H1 (cell line): ENCODE measurements at regions of chrX and their contacts with region 1.

Region 1: DNA sequence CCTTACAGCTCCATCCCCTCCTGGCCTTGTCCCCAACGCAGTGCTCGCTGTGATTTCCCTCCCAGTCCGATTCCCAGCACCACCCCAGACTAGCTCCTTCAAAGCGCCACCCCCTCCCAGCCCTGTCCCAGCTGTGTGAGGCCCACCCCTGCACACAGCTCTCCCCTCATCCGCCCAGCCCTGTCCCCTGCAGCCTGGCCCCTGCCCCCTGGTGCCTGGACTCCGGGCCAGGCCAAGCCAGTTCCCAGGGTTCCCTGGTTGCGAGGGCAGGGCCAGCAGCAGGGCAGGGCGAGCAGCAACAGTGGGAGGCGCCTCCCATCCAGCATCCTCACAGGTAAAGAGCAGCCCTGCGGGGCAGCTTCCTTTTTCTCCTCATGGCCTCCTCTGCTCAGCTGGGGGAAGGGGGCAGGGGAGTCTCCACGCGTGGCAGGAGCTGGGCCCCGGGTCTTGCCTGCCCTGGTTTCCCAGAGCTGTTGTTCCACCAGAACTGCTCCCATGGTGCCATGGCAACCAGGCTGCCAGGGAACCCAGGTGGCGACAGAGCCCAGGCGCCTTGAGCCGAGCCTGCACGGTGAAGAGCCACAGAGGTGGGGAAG is 24.8 kb downstream of the IQSEC2 start:
- DNase-seq: no peak
- H3K4me3 ChIP-seq: peak overlapping the region in 2 of 4 experiments; percentile 5 to 45; a peak in 3 of 8 replicates
- H3K27ac ChIP-seq: no peak overlapping the region; the same call in 1 of the 2 replicates
- H3K4me1 ChIP-seq: peaks cover 0 to 11% (median 4%) of the 10 kb centered on the region in 4 experiments; a peak in 5 of 7 replicates
- H3K27me3 ChIP-seq: no peaks in the 10 kb centered on the region
- CTCF ChIP-seq: no peak
- EP300 ChIP-seq: no peak
- POLR2A ChIP-seq: no peak
- RAD21 ChIP-seq: no peak

Region 2: DNA sequence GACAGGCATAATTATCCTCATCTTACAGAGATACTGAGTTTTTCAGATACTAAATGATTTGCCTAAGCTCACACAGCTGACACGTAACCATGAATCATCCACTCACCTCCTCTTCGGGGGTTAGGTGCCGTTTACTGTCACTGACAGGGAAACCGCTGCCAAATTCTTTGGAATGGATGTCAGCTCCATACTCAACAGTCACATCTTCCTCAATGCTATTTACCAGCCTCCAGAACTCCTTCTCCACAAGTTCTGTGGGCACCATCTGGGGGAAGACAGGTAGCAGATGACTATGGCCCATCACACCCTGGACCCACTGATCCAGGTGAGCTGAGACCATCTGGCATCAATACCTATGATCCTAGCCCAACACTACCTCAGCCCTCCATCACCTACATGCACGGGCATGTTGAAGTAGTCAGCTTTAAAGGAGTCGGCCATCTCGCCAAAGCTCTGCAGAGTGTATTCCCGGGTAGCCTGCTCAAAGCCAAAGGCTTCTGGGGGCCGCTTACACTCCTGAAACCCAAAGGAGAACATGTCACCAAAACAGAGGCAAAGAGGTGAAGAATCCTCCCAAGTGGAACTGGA is 45.1 kb before region 1 on chrX:
- CTCF ChIA-PET with region 1: no interaction called
- POLR2A ChIA-PET with region 1: no interaction called
- DNase-seq: no peak
- H3K4me3 ChIP-seq: no peak overlapping the region
- H3K27ac ChIP-seq: no peak overlapping the region
- H3K4me1 ChIP-seq: no peaks in the 10 kb centered on the region
- H3K27me3 ChIP-seq: no peaks in the 10 kb centered on the region
- CTCF ChIP-seq: no peak
- EP300 ChIP-seq: no peak
- POLR2A ChIP-seq: no peak
- RAD21 ChIP-seq: no peak

Region 3: DNA sequence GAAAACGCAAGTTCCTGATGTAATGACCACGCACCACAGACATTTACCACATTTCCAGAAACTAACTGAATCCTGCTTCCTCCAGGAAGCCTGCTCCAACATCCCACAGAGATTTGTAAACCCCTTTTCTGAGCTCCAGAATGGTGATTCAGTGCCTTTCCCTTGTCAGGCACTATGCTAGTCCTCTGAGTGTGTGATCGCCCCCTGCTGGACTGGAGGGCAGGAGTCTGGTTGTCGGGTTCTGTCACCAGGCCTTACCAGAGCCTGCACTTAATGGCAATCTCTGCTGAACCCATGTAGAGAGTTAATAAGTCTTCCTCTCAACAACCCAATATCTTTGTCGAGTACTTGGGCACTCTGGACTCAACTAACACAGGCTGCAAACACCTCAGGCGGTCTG is 17.1 kb before region 1 on chrX:
- CTCF ChIA-PET with region 1: interaction called, 12 read pairs
- POLR2A ChIA-PET with region 1: interaction called, 3 read pairs
- DNase-seq: peak in 1 of 2 experiments; percentile 49
- H3K4me3 ChIP-seq: no peak overlapping the region
- H3K27ac ChIP-seq: no peak overlapping the region
- H3K4me1 ChIP-seq: no peaks in the 10 kb centered on the region
- H3K27me3 ChIP-seq: no peaks in the 10 kb centered on the region
- CTCF ChIP-seq: peak; percentile 22 to 61 (median 59); a peak in 3 of 4 replicates
- EP300 ChIP-seq: no peak
- POLR2A ChIP-seq: no peak
- RAD21 ChIP-seq: 0 out of 4 replicates have a peak, but pooled peaks of 1 of the 2 experiments have one; percentile 9

Region 4: DNA sequence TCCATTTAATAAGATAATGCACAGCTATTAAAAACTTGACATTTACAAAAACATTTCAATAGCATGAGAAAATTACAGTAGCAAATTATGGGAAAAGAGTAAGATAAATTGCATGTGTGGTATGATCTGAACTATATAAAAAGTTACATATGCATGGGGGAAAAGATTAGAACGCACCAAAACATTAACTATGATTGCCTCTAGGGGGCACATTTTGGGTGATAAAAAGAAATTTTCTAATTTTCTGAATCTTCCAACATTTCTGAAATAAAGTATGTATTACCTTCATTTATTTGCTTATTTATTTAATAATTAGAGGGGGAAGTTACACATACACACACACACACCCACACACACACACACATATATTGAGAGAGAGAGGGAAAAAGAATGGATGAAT is 11.9 kb before region 1 on chrX:
- CTCF ChIA-PET with region 1: interaction called, 12 read pairs
- POLR2A ChIA-PET with region 1: interaction called, 3 read pairs
- DNase-seq: no peak
- H3K4me3 ChIP-seq: no peak overlapping the region
- H3K27ac ChIP-seq: no peak overlapping the region
- H3K4me1 ChIP-seq: no peaks in the 10 kb centered on the region
- H3K27me3 ChIP-seq: no peaks in the 10 kb centered on the region
- CTCF ChIP-seq: no peak
- EP300 ChIP-seq: no peak
- POLR2A ChIP-seq: no peak
- RAD21 ChIP-seq: no peak

Region 5: DNA sequence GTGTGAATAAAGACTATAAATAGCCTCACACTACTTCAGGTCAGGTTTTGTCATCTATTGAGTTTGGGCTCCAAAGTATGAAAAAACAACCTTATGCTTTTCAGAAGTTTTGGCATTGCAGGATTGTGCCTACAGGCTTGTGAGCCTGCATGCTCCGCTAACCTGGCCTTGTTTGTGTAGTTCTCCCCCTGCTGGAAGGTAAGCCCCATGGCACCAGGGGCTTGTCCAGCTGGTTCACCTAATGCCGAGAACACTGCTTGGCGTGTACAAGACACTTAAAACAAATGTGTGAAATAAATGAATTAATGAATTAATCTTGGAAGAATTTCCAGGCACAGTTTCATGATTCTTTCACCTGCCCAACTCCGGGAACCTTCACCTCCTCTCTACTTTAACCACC is 179.5 kb after region 1 on chrX:
- CTCF ChIA-PET with region 1: no interaction called
- POLR2A ChIA-PET with region 1: no interaction called
- DNase-seq: peak in 1 of 2 experiments; percentile 53
- H3K4me3 ChIP-seq: no peak overlapping the region
- H3K27ac ChIP-seq: no peak overlapping the region
- H3K4me1 ChIP-seq: peaks cover 0 to 7% (median 1%) of the 10 kb centered on the region in 4 experiments; a peak in 3 of 7 replicates
- H3K27me3 ChIP-seq: peaks cover 0 to 10% (median 6%) of the 10 kb centered on the region in 4 experiments; a peak in 4 of 7 replicates
- CTCF ChIP-seq: peak; percentile 72 to 76 (median 75)
- EP300 ChIP-seq: no peak
- POLR2A ChIP-seq: no peak
- RAD21 ChIP-seq: peak; percentile 55 to 63